PC-3 (cell line): ENCODE measurements at regions of chr4 and their contacts with region 1.

Region 1: GRCh38 chr4:113761620-113762185 is at the start of gene CAMK2D:
- DNase-seq: peak; percentile 75
- ATAC-seq: peak; percentile 67
- H3K4me3 ChIP-seq: peak within 1 kb of the TSS; percentile 91
- H3K27ac ChIP-seq: peak within 1 kb of the TSS; percentile 98
- H3K4me1 ChIP-seq: peaks cover 16% of the 10 kb centered on the region
- H3K27me3 ChIP-seq: no peaks in the 10 kb centered on the region
- CTCF ChIP-seq: peak; percentile 55
- total RNA-seq, gene CAMK2D: 14.3 and 15.4 TPM in 2 replicates

Region 2: GRCh38 chr4:113278324-113278934 is 483.3 kb before region 1 on chr4:
- CTCF ChIA-PET with region 1: no interaction called
- POLR2A ChIA-PET with region 1: no interaction called
- intact Hi-C with region 1: loop called (anchors 5 kb)
- DNase-seq: peak; percentile 74
- ATAC-seq: peak; percentile 88
- H3K4me3 ChIP-seq: no peak overlapping the region
- H3K27ac ChIP-seq: no peak overlapping the region
- H3K4me1 ChIP-seq: no peaks in the 10 kb centered on the region
- H3K27me3 ChIP-seq: no peaks in the 10 kb centered on the region
- CTCF ChIP-seq: peak; percentile 87

Region 3: DNA sequence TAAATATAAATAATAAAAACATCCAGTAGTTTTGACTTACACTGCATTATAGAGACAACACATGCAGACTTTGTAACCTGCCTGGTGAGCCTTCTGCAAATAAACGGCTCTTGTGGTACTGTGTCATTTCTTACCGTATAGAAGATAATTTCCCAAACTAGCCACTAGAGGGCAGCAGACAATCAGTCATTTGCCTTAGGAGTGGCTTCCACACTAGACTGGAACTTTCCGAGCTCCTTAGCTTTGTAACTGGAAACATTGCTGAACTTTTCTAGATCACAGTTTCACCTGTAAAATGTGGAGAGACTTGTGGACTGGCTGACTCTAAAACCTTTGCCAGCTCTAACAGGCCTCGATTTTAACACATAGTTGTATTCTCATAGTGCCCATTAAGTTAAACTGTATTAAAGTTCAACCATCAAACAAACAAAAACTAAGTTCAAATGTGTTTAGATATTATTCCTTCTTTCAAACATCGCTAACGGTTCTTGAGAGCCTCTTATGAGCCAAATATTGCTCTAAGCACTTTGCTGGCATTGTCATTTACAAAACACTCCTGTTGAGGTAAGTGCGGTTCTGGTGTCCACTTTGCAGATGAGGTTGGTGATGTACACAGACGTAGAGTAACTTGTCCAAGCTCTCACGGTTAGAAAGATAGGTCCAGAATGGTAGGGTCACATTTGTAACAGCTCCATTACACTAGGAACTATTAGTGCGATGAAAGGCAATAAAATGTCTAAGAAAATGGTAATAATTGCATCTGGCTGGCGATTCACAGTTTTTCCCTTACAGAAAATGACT is 366.8 kb before region 1 on chr4:
- CTCF ChIA-PET with region 1: no interaction called
- POLR2A ChIA-PET with region 1: no interaction called
- intact Hi-C with region 1: loop called (anchors 1 kb)
- DNase-seq: peak; percentile 92
- ATAC-seq: peak; percentile 89
- H3K4me3 ChIP-seq: no peak overlapping the region; the same call in 1 of the 2 replicates
- H3K27ac ChIP-seq: peak overlapping the region; percentile 49
- H3K4me1 ChIP-seq: peaks cover 15% of the 10 kb centered on the region
- H3K27me3 ChIP-seq: no peaks in the 10 kb centered on the region
- CTCF ChIP-seq: peak; percentile 82

Region 4: GRCh38 chr4:113468165-113469022 is 293.3 kb before region 1 on chr4:
- CTCF ChIA-PET with region 1: no interaction called
- POLR2A ChIA-PET with region 1: no interaction called
- intact Hi-C with region 1: loop called (anchors 2 kb)
- DNase-seq: peak; percentile 93
- ATAC-seq: peak; percentile 96
- H3K4me3 ChIP-seq: peak overlapping the region; percentile 46; the same call in 1 of the 2 replicates
- H3K27ac ChIP-seq: peak overlapping the region; percentile 87
- H3K4me1 ChIP-seq: peaks cover 26% of the 10 kb centered on the region
- H3K27me3 ChIP-seq: no peaks in the 10 kb centered on the region
- CTCF ChIP-seq: no peak

Region 5: DNA sequence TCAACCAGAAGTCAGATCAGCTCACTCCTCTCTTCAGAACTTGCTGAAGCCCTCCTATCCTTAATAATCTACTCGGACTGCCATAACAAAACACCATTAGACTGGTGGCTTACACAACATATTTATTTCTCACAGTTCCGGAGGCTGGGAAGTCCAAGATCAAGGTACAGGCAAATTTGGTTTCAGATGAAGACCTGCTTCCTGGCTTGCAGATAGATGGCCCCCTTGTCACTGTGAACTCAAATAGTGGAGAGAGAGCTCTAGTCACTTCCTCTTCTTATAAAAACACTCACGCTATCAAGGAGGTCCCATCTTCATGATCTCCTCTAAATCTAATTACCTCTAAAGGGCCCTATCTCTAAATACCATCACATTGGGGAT is 125.3 kb before region 1 on chr4:
- CTCF ChIA-PET with region 1: interaction called, 3 read pairs
- POLR2A ChIA-PET with region 1: no interaction called
- intact Hi-C with region 1: loop called (anchors 2 kb)
- DNase-seq: peak; percentile 29
- ATAC-seq: peak; percentile 42
- H3K4me3 ChIP-seq: no peak overlapping the region
- H3K27ac ChIP-seq: no peak overlapping the region
- H3K4me1 ChIP-seq: peaks cover 47% of the 10 kb centered on the region
- H3K27me3 ChIP-seq: no peaks in the 10 kb centered on the region
- CTCF ChIP-seq: peak; percentile 36

Region 6: DNA sequence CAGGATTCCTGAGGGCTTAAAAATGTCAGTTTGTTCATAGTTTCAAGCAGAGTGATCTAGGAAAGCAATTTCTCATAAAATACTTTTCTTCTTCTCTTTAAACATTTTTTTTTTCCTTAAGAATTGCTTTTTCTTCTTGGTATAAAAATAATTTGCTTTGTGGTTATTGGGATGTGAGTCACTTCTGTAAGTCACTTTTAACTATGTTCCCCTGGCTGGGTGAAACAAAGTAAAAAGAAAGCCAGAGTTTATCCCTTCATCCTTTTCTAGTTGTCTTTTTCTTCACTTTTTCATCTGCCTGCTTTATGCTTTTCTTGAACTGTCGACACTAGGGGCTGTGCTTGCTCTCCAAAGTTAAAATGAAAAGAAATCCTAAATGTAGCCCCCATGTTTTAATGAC is 184.2 kb after region 1 on chr4:
- CTCF ChIA-PET with region 1: no interaction called
- POLR2A ChIA-PET with region 1: no interaction called
- intact Hi-C with region 1: no loop called
- DNase-seq: peak; percentile 50
- ATAC-seq: peak; percentile 74
- H3K4me3 ChIP-seq: peak overlapping the region; percentile 23; the same call in 1 of the 2 replicates
- H3K27ac ChIP-seq: peak overlapping the region; percentile 51
- H3K4me1 ChIP-seq: peaks cover 27% of the 10 kb centered on the region
- H3K27me3 ChIP-seq: no peaks in the 10 kb centered on the region
- CTCF ChIP-seq: no peak

Region 7: GRCh38 chr4:114386637-114387233 is 625.0 kb after region 1 on chr4:
- CTCF ChIA-PET with region 1: no interaction called
- POLR2A ChIA-PET with region 1: no interaction called
- intact Hi-C with region 1: loop called (anchors 5 kb)
- DNase-seq: peak; percentile 55
- ATAC-seq: peak; percentile 42
- H3K4me3 ChIP-seq: no peak overlapping the region
- H3K27ac ChIP-seq: no peak overlapping the region
- H3K4me1 ChIP-seq: peaks cover 13% of the 10 kb centered on the region
- H3K27me3 ChIP-seq: no peaks in the 10 kb centered on the region
- CTCF ChIP-seq: peak; percentile 71